ENCODE measurements at regions of chr1 and their contacts with region 1.

Region 1: DNA sequence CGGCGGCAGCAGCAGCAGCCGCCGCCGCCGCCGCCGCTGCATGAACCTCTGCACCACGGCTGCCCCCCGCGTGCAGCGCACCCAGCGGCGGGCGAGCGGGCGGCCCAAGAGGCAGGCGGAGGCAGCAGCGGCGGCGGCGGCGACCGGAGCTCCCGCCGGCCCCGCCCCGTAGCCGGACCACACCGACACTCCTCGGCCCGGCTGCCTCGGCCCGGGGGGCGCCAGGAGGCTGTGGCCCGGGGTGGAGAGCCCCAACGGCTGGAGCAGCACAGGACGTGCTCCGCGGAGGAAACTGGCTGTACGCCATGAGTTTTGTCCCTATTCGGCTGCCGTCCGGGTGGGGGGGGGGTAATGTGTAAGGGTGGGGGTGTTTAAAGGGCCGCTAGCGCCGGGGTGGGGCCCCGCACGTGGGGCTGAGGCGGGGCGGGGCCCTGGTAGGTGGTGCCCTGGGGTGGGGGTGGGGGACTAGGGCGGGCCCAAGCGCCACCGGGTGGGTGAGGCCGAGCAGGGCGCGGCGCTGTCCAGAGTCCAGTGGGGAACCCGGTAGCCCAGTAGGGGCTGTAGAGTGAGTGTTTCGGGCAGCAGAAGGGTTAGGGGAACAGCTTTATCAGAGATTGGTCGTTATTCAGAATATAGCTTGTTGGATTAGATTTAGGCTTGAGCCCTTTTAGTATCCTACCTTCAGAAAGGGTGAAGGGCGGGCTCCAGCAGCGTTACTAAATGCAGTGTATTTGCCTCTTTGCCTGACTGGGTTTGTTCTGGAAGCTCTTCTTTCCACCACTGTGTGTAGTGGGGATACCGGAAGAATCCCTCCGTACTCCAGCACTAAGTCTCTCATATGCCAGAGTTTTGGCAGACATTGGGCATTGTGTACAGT is at the start of gene FAM78B:
- DNase-seq: peak; percentile 91 to 99 (median 98)
- ATAC-seq: peak; percentile 97
- H3K4me3 ChIP-seq: peak within 1 kb of the TSS; percentile 66
- H3K27ac ChIP-seq: no peak within 1 kb of the TSS
- H3K4me1 ChIP-seq: peaks cover 7 to 21% of the 10 kb centered on the region in 2 experiments; a peak in 4 of 5 replicates
- H3K27me3 ChIP-seq: peaks cover 22 to 25% of the 10 kb centered on the region in 2 experiments; a peak in 4 of 5 replicates
- CTCF ChIP-seq: peak; percentile 8 to 56 (median 18); a peak in 4 of 6 replicates
- EP300 ChIP-seq: no peak
- POLR2A ChIP-seq: no peak
- RAD21 ChIP-seq: no peak
- polyA plus RNA-seq, gene FAM78B: 0.04 TPM in 1 of 2 experiments, not detected in the other

Region 2: DNA sequence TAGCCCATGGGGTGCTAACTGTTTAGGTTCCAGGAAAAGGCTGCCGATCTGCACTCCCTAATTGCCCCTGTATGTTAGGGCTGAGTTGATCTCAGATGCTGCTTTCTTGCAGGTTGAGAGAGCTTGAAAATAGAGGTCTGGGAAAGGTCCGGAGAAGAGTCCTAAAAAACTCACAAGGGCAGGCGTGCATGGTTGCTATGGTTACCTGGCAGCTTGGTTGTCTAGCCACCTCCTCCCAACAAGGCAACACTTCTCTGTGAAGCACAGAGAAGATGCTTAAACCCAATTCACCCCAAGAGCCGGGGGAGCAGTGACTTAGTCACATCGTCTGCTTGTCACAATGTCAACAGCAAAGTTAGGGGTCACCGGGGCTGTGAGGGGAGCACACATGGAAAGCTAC is 654.1 kb before region 1 on chr1:
- CTCF ChIA-PET with region 1: no interaction called
- POLR2A ChIA-PET with region 1: no interaction called
- in situ Hi-C with region 1: no loop called
- intact Hi-C with region 1: no loop called
- DNase-seq: no peak
- ATAC-seq: no peak
- H3K4me3 ChIP-seq: no peak overlapping the region
- H3K27ac ChIP-seq: no peak overlapping the region
- H3K4me1 ChIP-seq: no peaks in the 10 kb centered on the region
- H3K27me3 ChIP-seq: peaks cover 12 to 14% of the 10 kb centered on the region in 2 experiments
- CTCF ChIP-seq: no peak
- EP300 ChIP-seq: no peak
- POLR2A ChIP-seq: no peak
- RAD21 ChIP-seq: no peak

Region 3: DNA sequence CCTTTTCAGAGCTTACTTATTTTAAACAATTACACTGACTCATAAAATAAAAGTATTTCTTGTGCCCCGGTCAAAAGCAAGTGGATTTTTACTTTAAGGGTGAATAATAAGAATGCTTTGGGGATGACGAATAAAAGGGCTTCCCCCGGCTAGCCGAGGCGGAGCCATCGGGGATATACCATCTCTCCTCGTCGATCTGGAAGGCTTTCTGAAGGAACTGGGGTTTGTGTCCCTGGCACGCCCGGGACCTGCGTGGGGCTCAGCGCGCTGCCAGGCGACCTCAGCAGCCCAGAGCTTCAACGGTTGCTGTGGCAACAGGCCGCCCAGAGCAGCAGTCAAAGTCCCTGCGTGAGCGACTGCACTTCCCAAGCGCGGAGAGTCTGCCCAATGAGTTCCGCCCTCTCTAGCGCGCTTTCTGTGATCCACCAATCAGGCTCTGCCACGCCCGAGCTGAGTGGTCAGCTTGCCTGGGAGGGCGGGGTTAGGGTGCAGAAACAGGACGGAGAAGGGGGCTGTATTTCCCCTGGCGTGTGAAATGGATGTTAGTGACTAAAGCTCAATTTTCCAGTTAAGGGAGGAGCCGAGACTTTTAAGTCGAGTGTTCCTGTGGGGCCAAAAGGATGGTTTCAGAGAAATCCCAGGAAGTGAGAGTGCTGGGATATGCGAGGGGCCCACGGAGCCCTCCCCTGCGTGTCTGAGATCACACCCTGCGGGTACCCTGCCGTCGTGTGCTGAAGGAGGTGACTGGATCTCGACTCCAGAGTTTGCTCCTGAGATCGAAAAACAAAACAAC is 568.9 kb before region 1 on chr1:
- CTCF ChIA-PET with region 1: no interaction called
- POLR2A ChIA-PET with region 1: no interaction called
- in situ Hi-C with region 1: no loop called
- intact Hi-C with region 1: no loop called
- DNase-seq: peak; percentile 98 to 99 (median 98)
- ATAC-seq: peak; percentile 99
- H3K4me3 ChIP-seq: peak overlapping the region; percentile 47
- H3K27ac ChIP-seq: peak overlapping the region; percentile 67
- H3K4me1 ChIP-seq: peaks cover 3 to 9% of the 10 kb centered on the region in 2 experiments; a peak in 4 of 5 replicates
- H3K27me3 ChIP-seq: 0 out of 5 replicates have a peak, but pooled peaks cover 0 to 4% of the 10 kb centered on the region in 2 experiments
- CTCF ChIP-seq: 0 out of 6 replicates have a peak, but pooled peaks of 1 of the 3 experiments have one; percentile 1
- EP300 ChIP-seq: peak; percentile 6; the same call in 1 of the 2 replicates
- POLR2A ChIP-seq: peak; percentile 67
- RAD21 ChIP-seq: no peak

Region 4: DNA sequence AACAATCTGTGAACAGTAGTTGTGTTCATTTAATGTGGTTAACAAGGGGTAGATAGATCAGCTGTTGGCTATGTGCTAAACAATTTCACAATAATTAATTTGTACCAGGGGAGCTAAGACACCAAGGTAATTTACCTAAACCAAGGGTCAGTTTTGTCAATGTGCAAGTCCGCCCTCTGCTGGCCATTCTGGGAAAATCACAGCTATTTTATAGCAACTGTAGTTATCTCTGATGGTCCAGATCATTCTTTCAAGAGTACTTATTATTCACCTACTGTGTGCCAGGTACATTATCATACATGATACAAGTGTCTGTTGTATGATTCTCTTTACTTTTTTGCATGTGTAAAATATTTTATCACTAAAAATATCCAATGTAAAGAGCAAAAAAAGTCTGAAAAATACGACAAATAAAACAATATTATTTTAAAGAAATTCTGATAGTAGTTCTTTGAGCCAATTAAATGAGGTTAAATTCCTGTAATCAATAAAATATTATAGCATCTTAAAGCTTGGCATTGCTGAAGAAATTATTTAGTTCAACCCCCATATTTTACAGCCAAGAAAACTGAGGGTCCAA is 312.2 kb after region 1 on chr1:
- CTCF ChIA-PET with region 1: no interaction called
- POLR2A ChIA-PET with region 1: no interaction called
- in situ Hi-C with region 1: no loop called
- intact Hi-C with region 1: loop called (anchors 10 kb)
- DNase-seq: peak; percentile 54 to 80 (median 64)
- ATAC-seq: peak; percentile 81
- H3K4me3 ChIP-seq: no peak overlapping the region
- H3K27ac ChIP-seq: no peak overlapping the region
- H3K4me1 ChIP-seq: peaks cover 0 to 7% of the 10 kb centered on the region in 2 experiments; a peak in 4 of 5 replicates
- H3K27me3 ChIP-seq: no peaks in the 10 kb centered on the region
- CTCF ChIP-seq: peak; percentile 68 to 78 (median 75)
- EP300 ChIP-seq: no peak
- POLR2A ChIP-seq: no peak
- RAD21 ChIP-seq: peak; percentile 65 to 78

Measured in K562 (cell line).